Gastrocnemius medialis (tissue), 4 donors: ENCODE measurements at regions of chr15 and their contacts with region 1.

Region 1: DNA sequence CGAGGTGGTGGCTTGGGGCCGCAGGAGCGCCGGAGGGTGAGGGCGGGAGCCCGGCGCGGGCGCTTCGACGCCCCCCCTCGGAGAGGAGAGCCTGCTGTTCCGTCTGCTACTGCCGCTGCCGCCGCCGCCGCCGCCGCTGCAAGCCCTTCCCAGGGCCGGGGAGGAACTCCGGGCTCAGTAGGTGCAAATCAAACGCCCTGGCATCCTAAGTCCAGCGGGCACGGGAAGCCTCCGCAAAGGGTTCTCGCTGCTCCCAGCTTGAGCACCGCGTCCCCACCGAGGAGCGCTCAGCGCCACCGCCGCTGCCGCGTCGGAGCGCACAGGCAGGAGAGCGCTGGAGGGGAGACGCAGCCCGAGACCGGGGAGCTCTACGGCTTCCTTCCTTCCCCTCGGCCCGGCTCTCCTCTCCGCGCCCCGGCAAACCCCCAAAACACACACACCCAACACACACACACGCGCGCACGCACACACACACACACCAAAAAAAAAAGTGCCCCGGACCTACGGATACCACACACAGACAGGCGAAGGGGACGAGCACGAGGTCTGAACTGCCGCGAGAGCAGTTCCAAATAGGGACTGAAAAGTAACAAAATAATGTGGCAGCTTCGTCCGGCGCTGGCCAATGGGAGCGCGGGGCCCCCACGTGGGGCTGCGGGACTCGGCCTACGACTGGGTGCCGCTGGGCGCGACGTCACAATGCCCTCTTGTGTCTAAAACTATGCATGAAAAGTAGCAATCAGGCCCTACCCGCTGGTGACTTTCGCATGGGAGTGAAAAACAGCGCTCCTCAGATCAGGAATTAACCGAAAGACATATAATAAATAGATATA is at the start of gene TLE3:
- DNase-seq: peak; percentile 96 to 97
- ATAC-seq: peak; percentile 40 to 48
- H3K4me3 ChIP-seq: peak within 1 kb of the TSS; percentile 70 to 83 (median 76)
- H3K27ac ChIP-seq: peak within 1 kb of the TSS; percentile 88 to 96 (median 91)
- H3K4me1 ChIP-seq: peaks cover 47 to 65% of the 10 kb centered on the region in 2 donors
- H3K27me3 ChIP-seq: peaks cover 0 to 12% (median 3%) of the 10 kb centered on the region in 3 donors
- CTCF ChIP-seq: peak in 3 of 5 experiments; percentile 40 to 50 (median 43)
- POLR2A ChIP-seq: peak; percentile 83 to 95
- total RNA-seq, gene TLE3: 4.6 to 35.3 (median 13.3) TPM

Region 2: GRCh38 chr15:69462493-69463181 is 634.9 kb before region 1 on chr15:
- in situ Hi-C with region 1: no loop called
- intact Hi-C with region 1: loop called (anchors 5 kb)
- DNase-seq: peak; percentile 96 to 97
- ATAC-seq: peak; percentile 99
- H3K4me3 ChIP-seq: peak overlapping the region; percentile 64 to 76 (median 72)
- H3K27ac ChIP-seq: peak overlapping the region; percentile 97 to 99 (median 97)
- H3K4me1 ChIP-seq: peaks cover 19 to 24% of the 10 kb centered on the region in 2 donors
- H3K27me3 ChIP-seq: no peaks in the 10 kb centered on the region
- CTCF ChIP-seq: peak; percentile 88 to 94 (median 90)
- POLR2A ChIP-seq: peak; percentile 85 to 94

Region 3: DNA sequence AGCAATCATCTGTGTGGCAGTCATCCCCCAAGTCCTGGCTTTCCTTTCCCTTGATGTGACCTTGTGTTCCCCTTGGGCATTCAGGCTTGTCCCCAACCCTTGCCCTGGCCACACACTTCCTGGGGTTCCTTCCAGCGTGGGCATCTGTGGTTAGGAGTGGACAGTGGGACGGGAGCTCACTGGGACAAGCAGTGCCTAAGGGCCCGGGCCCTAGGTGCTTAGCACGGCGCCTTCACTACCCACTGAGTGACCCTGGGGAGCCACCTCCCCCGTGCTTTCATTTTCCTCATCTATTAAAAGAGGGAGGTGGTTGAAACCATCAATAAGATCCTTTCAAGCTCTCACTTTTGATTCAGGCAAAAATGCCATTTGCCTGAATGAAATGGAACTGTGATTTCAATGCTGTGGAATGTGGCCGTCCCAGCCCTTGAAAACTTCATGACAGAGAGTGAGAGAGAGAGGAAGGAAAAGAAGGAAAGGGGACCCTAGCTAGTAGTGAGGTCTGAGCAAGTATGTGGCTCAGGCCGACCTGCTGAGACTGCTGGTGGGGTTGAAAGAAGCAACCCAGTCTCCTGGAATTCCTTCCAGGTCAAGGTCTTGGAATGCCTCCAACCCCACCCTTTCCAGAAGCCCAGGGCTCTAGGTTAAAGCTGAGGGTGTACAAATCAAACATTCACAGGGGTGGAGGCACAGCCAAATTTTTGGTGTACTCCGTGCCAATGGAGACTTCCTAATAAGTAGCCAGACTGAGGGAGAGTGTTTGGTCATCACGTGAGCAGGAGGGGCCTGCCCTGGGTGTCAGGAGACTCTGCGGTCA is 302.7 kb before region 1 on chr15:
- in situ Hi-C with region 1: no loop called
- intact Hi-C with region 1: loop called (anchors 5 kb)
- DNase-seq: peak; percentile 33 to 42
- ATAC-seq: no peak
- H3K4me3 ChIP-seq: no peak overlapping the region
- H3K27ac ChIP-seq: peak overlapping the region; percentile 46 to 68 (median 60)
- H3K4me1 ChIP-seq: peaks cover 29 to 39% of the 10 kb centered on the region in 2 donors
- H3K27me3 ChIP-seq: no peaks in the 10 kb centered on the region
- CTCF ChIP-seq: no peak
- POLR2A ChIP-seq: no peak

Region 4: GRCh38 chr15:69893863-69894262 is 203.7 kb before region 1 on chr15:
- in situ Hi-C with region 1: no loop called
- intact Hi-C with region 1: loop called (anchors 1 kb)
- DNase-seq: peak; percentile 43 to 79
- ATAC-seq: peak; percentile 94 to 96
- H3K4me3 ChIP-seq: no peak overlapping the region
- H3K27ac ChIP-seq: no peak overlapping the region
- H3K4me1 ChIP-seq: peaks cover 13 to 14% of the 10 kb centered on the region in 2 donors
- H3K27me3 ChIP-seq: no peaks in the 10 kb centered on the region
- CTCF ChIP-seq: no peak
- POLR2A ChIP-seq: no peak

Region 5: DNA sequence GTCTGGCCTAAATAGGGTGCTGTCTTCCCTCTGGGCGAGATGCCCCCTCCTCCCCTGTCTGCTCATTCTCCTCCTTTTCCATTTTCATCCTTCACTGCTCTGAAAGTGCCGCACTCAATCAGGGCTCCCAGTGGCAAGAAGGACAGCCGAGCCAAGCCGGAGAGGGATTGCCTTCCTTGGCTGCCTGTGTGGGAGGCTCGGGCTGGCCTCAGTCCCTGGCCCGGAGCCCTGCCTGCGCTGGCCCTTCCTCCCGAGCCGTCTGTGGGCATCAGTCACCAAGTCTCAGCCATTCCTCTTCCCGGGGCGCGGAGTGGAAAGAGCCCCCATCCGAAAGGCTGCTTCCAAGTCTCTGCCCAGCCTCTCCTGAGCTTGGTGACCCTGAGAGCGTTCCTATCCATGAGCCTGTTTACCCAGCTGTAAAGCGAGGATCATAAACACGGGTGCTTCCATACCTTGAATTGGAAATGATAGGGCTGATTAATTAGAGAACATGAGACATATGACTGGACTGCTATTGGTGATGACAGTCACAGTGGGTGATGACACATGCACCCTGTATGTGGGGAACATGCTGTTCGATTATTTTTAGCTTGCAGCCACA is 59.2 kb after region 1 on chr15:
- in situ Hi-C with region 1: no loop called
- intact Hi-C with region 1: loop called (anchors 2 kb)
- DNase-seq: peak; percentile 70 to 78
- ATAC-seq: peak; percentile 66 to 81
- H3K4me3 ChIP-seq: peak overlapping the region; percentile 7 to 33 (median 28)
- H3K27ac ChIP-seq: peak overlapping the region; percentile 67 to 85 (median 82)
- H3K4me1 ChIP-seq: peaks cover 33 to 45% of the 10 kb centered on the region in 2 donors
- H3K27me3 ChIP-seq: no peaks in the 10 kb centered on the region
- CTCF ChIP-seq: no peak
- POLR2A ChIP-seq: peak in 1 of 2 donors; percentile 30

Region 6: GRCh38 chr15:70488002-70488605 is 390.6 kb after region 1 on chr15:
- in situ Hi-C with region 1: loop called in 1 of 4 experiments (anchors 25 kb)
- intact Hi-C with region 1: no loop called
- DNase-seq: peak in 1 of 2 donors; percentile 52
- ATAC-seq: peak; percentile 48 to 76
- H3K4me3 ChIP-seq: no peak overlapping the region
- H3K27ac ChIP-seq: no peak overlapping the region
- H3K4me1 ChIP-seq: no peaks in the 10 kb centered on the region
- H3K27me3 ChIP-seq: no peaks in the 10 kb centered on the region
- CTCF ChIP-seq: peak; percentile 85 to 97 (median 93)
- POLR2A ChIP-seq: no peak